Activated B cell treated with CpG ODN at 0.5 μM for 24 hours (primary cell): ENCODE measurements at regions of chr4 and their contacts with region 1.

Region 1: DNA sequence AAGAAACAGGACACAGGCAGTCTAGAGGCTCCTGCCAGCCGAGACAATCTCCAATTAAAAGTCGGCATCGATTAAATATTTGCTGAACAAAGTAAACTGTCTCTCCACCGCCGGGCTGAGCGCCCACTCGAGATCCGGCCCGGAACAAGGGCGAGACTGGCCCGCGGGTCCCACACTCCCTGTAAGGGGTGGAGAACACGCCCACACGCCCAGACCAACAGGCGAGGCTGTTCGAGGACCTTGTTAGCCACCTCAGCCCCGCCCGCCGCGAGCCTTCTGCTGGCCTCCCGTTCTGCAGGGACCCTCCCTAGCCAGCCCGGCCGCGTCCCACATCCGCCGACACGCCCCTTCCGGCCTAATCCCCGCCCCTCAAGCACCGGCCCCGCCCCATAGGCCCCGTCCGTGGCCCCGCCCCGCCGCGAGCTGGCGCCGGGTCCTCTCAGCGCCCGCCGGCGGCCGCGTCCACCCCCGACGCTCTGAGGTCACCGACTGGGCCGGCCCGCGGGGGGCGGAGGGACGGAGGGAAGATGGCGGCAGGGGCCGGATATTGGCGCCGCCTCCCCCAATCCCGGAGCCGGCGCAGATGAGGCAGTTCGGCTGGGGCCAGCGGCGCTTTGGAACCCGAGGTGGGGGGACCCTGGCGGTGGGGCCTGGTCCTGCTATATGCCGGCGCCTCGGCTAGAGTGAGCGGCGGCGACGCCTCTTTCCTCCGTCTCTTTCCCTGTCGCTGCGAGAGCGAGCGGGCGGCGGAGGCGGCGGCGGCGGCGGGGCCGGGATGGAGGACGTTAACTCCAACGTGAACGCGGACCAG is at the start of gene SLAIN2:
- DNase-seq: peak; percentile 100
- ATAC-seq: peak; percentile 88
- H3K4me3 Mint-ChIP-seq: peak within 1 kb of the TSS; percentile 97
- H3K27ac Mint-ChIP-seq: peak within 1 kb of the TSS; percentile 96
- H3K4me1 Mint-ChIP-seq: peaks cover 44% of the 10 kb centered on the region
- H3K27me3 Mint-ChIP-seq: no peaks in the 10 kb centered on the region
- CTCF ChIP-seq: no peak
- total RNA-seq, gene SLAIN2: 50.8 and 62.1 TPM in 2 replicates

Region 2: GRCh38 chr4:47914220-47914925 is 426.8 kb before region 1 on chr4 and contains the start of gene NFXL1:
- CTCF ChIA-PET with region 1: no interaction called
- POLR2A ChIA-PET with region 1: interaction called, 4 read pairs
- intact Hi-C with region 1: loop called (anchors 1 kb)
- DNase-seq: peak; percentile 90
- ATAC-seq: peak; percentile 96
- H3K4me3 Mint-ChIP-seq: peak within 1 kb of the TSS; percentile 98
- H3K27ac Mint-ChIP-seq: peak within 1 kb of the TSS; percentile 92
- H3K4me1 Mint-ChIP-seq: peaks cover 31% of the 10 kb centered on the region
- H3K27me3 Mint-ChIP-seq: no peaks in the 10 kb centered on the region
- CTCF ChIP-seq: no peak
- total RNA-seq, gene NFXL1: 10.0 and 11.1 TPM in 2 replicates

Region 3: GRCh38 chr4:48047421-48047844 is 293.7 kb before region 1 on chr4:
- CTCF ChIA-PET with region 1: no interaction called
- POLR2A ChIA-PET with region 1: no interaction called
- intact Hi-C with region 1: loop called (anchors 5 kb)
- DNase-seq: peak; percentile 65
- ATAC-seq: peak; percentile 94
- H3K4me3 Mint-ChIP-seq: peak overlapping the region; percentile 72
- H3K27ac Mint-ChIP-seq: peak overlapping the region; percentile 65
- H3K4me1 Mint-ChIP-seq: peaks cover 63% of the 10 kb centered on the region
- H3K27me3 Mint-ChIP-seq: peaks cover 42% of the 10 kb centered on the region
- CTCF ChIP-seq: no peak

Region 4: DNA sequence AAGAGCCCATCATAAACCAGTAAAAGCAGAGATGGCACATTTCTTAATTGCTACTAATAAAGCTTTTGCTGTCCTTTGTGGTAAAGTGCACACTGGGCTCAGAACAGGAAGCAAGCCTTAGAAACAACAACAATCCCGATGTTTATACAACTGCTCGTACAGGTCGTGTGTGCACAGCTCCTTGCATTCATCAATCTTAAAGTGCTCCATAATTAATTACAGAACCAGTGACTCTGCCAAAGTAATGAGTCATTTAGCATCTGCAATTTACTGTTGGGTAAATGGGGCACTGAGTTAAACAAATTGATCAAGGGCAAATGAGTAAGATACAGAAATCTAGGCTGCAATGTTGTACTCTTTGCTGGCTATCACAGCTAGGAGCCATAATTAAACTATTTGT is 145.8 kb before region 1 on chr4:
- CTCF ChIA-PET with region 1: no interaction called
- POLR2A ChIA-PET with region 1: no interaction called
- intact Hi-C with region 1: loop called (anchors 5 kb)
- DNase-seq: no peak
- ATAC-seq: peak; percentile 18
- H3K4me3 Mint-ChIP-seq: peak overlapping the region; percentile 64
- H3K27ac Mint-ChIP-seq: peak overlapping the region; percentile 73
- H3K4me1 Mint-ChIP-seq: peaks cover 70% of the 10 kb centered on the region
- H3K27me3 Mint-ChIP-seq: no peaks in the 10 kb centered on the region
- CTCF ChIP-seq: no peak

Region 5: DNA sequence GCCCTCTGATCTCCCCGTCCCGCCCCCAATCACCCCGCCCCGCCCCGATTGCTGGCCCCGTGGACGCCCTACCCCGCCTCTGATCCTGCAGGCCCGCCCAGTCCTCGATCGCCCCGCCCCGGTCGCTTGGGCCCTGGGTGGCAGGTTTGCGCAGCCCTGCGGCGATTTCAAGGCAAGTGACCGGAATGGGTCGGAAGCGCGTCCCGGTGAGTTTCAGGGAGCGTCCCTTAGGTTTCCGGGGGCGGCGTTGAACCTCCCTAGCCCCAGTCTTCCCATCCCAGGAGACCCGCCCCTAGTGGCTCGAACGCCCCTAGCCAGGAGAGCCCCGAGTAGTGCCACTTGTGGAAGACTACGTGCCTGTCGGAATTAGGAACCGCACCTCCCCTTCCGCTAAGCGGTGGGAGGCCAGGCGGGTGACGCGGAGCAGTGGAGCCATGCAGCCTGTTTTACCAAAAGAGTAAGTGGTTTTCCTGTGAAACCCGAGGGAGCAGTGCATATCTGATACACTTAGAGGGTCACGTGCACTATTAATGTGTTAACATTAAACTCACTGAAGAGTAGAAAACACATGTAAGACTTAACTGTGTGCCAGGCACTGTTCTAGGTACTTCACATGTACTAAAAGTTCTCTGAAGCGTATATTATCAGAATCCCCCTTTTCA is 71.2 kb before region 1 on chr4:
- CTCF ChIA-PET with region 1: no interaction called
- POLR2A ChIA-PET with region 1: interaction called, 4 read pairs
- intact Hi-C with region 1: loop called (anchors 1 kb)
- DNase-seq: peak; percentile 88
- ATAC-seq: peak; percentile 90
- H3K4me3 Mint-ChIP-seq: peak overlapping the region; percentile 96
- H3K27ac Mint-ChIP-seq: peak overlapping the region; percentile 92
- H3K4me1 Mint-ChIP-seq: peaks cover 39% of the 10 kb centered on the region
- H3K27me3 Mint-ChIP-seq: no peaks in the 10 kb centered on the region
- CTCF ChIP-seq: no peak

Region 6: DNA sequence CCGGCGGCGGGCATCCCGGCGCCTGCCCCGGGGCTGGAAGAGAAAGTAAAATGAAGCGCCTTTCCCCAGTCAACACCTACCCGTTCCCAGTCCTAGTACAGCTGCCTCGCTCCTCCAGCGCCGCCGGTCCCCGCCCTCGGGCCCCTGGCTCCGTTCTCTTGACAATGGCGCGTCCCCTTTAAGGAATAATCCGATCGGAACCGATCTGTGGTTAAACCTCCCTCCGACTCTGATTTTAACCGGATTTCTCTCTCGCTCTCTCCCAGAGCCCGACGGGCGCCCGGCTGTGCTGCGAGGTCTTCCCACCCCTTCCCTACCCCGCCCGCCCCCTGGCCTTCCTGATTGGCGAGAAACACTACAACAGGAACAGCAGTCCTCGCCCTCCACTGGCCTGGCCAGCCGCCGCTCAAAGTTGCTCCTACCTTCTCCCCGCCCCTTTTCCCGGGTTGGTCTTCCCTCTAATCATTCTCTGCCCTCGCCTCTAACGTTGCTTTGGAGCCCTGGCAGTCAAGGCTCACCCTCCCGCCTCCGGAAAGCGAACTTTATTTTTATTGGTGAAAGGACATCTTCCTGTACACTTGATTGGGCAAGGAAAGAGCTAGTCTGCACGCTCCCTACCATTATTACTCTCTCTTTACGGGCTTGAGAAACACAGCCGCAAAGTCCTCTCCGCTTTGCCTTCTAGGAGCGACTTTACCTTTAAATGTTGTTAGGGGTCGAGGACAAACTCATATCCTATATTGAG is 439.0 kb after region 1 on chr4 and contains the start of gene FRYL:
- CTCF ChIA-PET with region 1: no interaction called
- POLR2A ChIA-PET with region 1: interaction called, 6 read pairs
- intact Hi-C with region 1: loop called (anchors 1 kb)
- DNase-seq: peak; percentile 86
- ATAC-seq: peak; percentile 91
- H3K4me3 Mint-ChIP-seq: peak within 1 kb of the TSS; percentile 94
- H3K27ac Mint-ChIP-seq: peak within 1 kb of the TSS; percentile 87
- H3K4me1 Mint-ChIP-seq: peaks cover 41% of the 10 kb centered on the region
- H3K27me3 Mint-ChIP-seq: no peaks in the 10 kb centered on the region
- CTCF ChIP-seq: no peak
- total RNA-seq, gene FRYL: 82.4 and 91.5 TPM in 2 replicates

Region 7: GRCh38 chr4:48906206-48907173 is 565.3 kb after region 1 on chr4 and contains the start of gene OCIAD2:
- CTCF ChIA-PET with region 1: no interaction called
- POLR2A ChIA-PET with region 1: interaction called, 4 read pairs
- intact Hi-C with region 1: loop called (anchors 10 kb)
- DNase-seq: peak; percentile 65
- ATAC-seq: peak; percentile 97
- H3K4me3 Mint-ChIP-seq: peak within 1 kb of the TSS; percentile 97
- H3K27ac Mint-ChIP-seq: peak within 1 kb of the TSS; percentile 86
- H3K4me1 Mint-ChIP-seq: peaks cover 29% of the 10 kb centered on the region
- H3K27me3 Mint-ChIP-seq: no peaks in the 10 kb centered on the region
- CTCF ChIP-seq: no peak
- total RNA-seq, gene OCIAD2: 37.0 and 38.3 TPM in 2 replicates